ENCODE measurements at regions of chr10 and their contacts with region 1.

Region 1: DNA sequence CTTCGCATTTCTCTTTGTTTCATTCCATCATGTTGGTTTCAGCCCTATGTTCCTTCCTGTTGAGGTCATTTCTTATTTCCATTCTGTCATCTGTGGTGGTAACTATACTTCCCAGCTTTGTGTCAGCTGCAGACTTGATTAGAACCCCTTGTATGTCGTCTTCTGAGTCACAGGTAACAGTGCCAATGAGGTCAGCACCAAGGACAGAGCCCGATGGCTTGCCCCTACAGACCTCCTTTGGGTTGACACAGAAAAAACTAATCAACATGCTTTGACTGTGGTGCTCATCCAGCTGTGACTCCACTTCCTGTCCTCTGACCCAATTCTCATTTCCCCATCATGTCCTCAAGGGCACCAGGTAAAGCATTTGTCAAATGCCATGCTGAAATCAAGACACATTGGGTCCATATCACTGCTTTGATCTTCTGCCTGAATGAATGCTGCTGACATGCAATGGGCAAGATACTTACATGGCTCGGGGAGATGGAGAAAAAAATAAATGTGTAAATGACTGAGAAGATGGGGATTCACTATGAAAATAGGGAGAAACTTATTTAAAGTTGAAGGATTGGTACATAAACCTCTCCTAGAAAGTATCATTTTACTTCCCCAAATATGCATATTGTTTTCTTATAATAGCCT is 25.6 kb upstream of the CRTAC1 start:
- DNase-seq: peak; percentile 58
- H3K4me3 Mint-ChIP-seq: no peak overlapping the region
- H3K27ac Mint-ChIP-seq: no peak overlapping the region
- H3K4me1 Mint-ChIP-seq: no peaks in the 10 kb centered on the region
- H3K27me3 Mint-ChIP-seq: peaks cover 10% of the 10 kb centered on the region
- CTCF ChIP-seq: no peak

Region 2: GRCh38 chr10:98074315-98074911 is 18.4 kb after region 1 on chr10:
- CTCF ChIA-PET with region 1: no interaction called
- POLR2A ChIA-PET with region 1: no interaction called
- intact Hi-C with region 1: loop called (anchors 2 kb)
- DNase-seq: peak; percentile 30
- H3K4me3 Mint-ChIP-seq: no peak overlapping the region
- H3K27ac Mint-ChIP-seq: no peak overlapping the region
- H3K4me1 Mint-ChIP-seq: no peaks in the 10 kb centered on the region
- H3K27me3 Mint-ChIP-seq: peaks cover 19% of the 10 kb centered on the region
- CTCF ChIP-seq: no peak

Measured in MCF 10A (cell line).